ENCODE measurements at regions of chr4 and their contacts with region 1.

Region 1: GRCh38 chr4:6783053-6783981 is 790 bp downstream of the KIAA0232 start:
- DNase-seq: peak; percentile 73 to 78
- ATAC-seq: peak; percentile 82 to 86
- H3K4me3 ChIP-seq: peak overlapping the region; percentile 91
- H3K27ac ChIP-seq: peak overlapping the region; percentile 99 to 100
- H3K4me1 ChIP-seq: peaks cover 36% of the 10 kb centered on the region
- CTCF ChIP-seq: no peak
- EP300 ChIP-seq: no peak
- POLR2A ChIP-seq: peak; percentile 27
- RAD21 ChIP-seq: no peak; a peak in 1 of 5 replicates

Region 2: DNA sequence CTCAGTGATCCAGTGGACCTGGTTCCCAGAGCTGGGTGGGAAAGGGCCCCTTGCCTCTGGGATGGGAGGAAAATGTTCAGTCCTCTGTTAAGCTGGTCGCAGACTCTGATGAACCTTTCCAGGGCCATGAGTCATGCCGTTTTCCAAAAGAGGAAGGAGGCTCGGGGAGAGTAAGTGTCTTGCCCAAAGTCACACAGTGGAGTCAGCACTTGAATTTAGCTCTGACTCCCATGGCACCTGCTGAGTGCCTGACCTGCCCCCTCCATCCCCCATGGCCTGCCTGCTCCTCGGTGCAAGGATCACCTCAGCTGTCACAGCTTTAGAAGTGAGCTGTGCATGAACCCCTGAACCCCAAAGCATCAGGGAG is 14.8 kb before region 1 on chr4:
- CTCF ChIA-PET with region 1: interaction called, 14 read pairs
- POLR2A ChIA-PET with region 1: no interaction called
- DNase-seq: no peak
- ATAC-seq: peak in 1 of 2 experiments; percentile 45; a peak in 3 of 6 replicates
- H3K4me3 ChIP-seq: no peak overlapping the region
- H3K27ac ChIP-seq: peak overlapping the region; percentile 41 to 60; a peak in 4 of 6 replicates
- H3K4me1 ChIP-seq: peaks cover 17% of the 10 kb centered on the region
- CTCF ChIP-seq: no peak
- EP300 ChIP-seq: no peak
- POLR2A ChIP-seq: no peak
- RAD21 ChIP-seq: no peak

Region 3: DNA sequence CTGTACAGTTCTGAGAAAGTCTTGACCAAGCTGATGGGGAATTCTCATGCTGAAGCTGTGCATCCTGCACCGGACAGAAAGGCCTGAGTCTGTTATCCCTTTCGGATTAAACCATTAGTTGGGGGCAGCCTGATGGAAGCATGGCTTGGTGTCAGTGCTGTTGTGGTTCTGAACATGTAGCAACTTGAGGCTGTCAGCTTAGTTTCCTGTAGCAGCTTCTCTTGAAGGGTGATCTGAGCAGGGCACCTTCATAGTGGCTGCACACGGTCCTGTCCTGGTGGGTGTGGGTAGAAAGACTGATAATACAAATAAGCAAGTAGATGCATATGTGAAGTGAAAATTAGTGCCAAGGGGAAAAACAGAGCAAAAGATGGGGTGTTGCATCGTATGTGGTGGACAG is 10.9 kb after region 1 on chr4:
- CTCF ChIA-PET with region 1: interaction called, 22 read pairs
- POLR2A ChIA-PET with region 1: no interaction called
- DNase-seq: no peak
- ATAC-seq: no peak
- H3K4me3 ChIP-seq: no peak overlapping the region
- H3K27ac ChIP-seq: no peak overlapping the region
- H3K4me1 ChIP-seq: peaks cover 21% of the 10 kb centered on the region
- CTCF ChIP-seq: no peak
- EP300 ChIP-seq: no peak
- POLR2A ChIP-seq: no peak
- RAD21 ChIP-seq: no peak

Region 4: GRCh38 chr4:6974138-6974848 is 191.0 kb after region 1 on chr4:
- CTCF ChIA-PET with region 1: no interaction called
- POLR2A ChIA-PET with region 1: no interaction called
- DNase-seq: peak; percentile 72 to 82
- ATAC-seq: peak; percentile 80 to 93
- H3K4me3 ChIP-seq: no peak overlapping the region
- H3K27ac ChIP-seq: no peak overlapping the region
- H3K4me1 ChIP-seq: peaks cover 6% of the 10 kb centered on the region; the same call in 2 of the 3 replicates
- CTCF ChIP-seq: peak; percentile 57
- EP300 ChIP-seq: no peak
- POLR2A ChIP-seq: no peak
- RAD21 ChIP-seq: peak; percentile 50 to 63; a peak in 3 of 5 replicates

Region 5: GRCh38 chr4:7017446-7018330 is 234.4 kb after region 1 on chr4:
- CTCF ChIA-PET with region 1: no interaction called
- POLR2A ChIA-PET with region 1: no interaction called
- DNase-seq: no peak
- ATAC-seq: no peak
- H3K4me3 ChIP-seq: no peak overlapping the region
- H3K27ac ChIP-seq: no peak overlapping the region
- H3K4me1 ChIP-seq: peaks cover 31% of the 10 kb centered on the region
- CTCF ChIP-seq: no peak
- EP300 ChIP-seq: no peak
- POLR2A ChIP-seq: no peak
- RAD21 ChIP-seq: no peak